Activated T-helper 1 cell treated with anti-CD3 and anti-CD28 coated beads, Interleukin-12 subunit alpha, Interleukin-12 subunit beta, Interleukin-2, Interleukin-4 antibody, amounts not matched to agents 30 ng/mL and 10 ng/mL and 1 ng/mL, durations not matched to agents 14 hours and 24 hours and 36 hours (primary cell): ENCODE measurements at regions of chr13 and their contacts with region 1.

Region 1: DNA sequence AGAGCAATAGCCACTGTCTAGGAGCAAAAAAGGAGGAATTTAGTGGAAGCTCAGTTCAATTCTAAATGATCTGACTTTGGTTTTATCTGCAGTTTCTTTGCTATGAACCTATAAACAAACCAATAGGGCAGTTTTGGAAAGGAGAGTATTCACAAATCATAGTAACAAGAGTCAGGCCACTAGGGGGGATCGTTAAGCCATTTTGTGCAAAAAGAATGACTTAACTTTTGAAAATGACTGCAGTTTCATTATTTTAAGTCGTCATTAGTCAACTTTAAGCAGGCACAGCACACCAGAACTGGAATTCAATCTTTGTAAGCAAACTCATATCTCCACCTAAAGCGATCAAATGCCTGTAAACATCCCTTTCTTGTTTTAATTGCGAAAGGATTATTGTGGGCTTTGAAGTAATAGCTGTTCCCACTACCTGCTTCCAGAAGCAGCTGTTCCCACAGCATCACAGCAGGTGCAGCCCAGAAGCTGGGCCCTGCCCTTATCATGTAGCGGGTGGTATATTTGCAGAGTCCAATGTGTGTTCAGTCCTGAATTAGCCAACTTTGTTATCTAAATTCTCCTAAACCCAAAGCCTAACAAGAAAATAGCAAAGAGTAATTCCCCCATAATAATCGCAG is 51.5 kb downstream of the SOX21 start:
- DNase-seq: no peak
- H3K4me3 Mint-ChIP-seq: no peak overlapping the region
- H3K27ac Mint-ChIP-seq: no peak overlapping the region
- H3K4me1 Mint-ChIP-seq: peaks cover 51% of the 10 kb centered on the region
- H3K27me3 Mint-ChIP-seq: peaks cover 8% of the 10 kb centered on the region

Region 2: GRCh38 chr13:94549232-94550061 is 111.4 kb before region 1 on chr13:
- intact Hi-C with region 1: loop called (anchors 2 kb)
- DNase-seq: peak; percentile 87
- H3K4me3 Mint-ChIP-seq: peak overlapping the region; percentile 84
- H3K27ac Mint-ChIP-seq: peak overlapping the region; percentile 99
- H3K4me1 Mint-ChIP-seq: peaks cover 25% of the 10 kb centered on the region
- H3K27me3 Mint-ChIP-seq: peaks cover 15% of the 10 kb centered on the region

Region 3: DNA sequence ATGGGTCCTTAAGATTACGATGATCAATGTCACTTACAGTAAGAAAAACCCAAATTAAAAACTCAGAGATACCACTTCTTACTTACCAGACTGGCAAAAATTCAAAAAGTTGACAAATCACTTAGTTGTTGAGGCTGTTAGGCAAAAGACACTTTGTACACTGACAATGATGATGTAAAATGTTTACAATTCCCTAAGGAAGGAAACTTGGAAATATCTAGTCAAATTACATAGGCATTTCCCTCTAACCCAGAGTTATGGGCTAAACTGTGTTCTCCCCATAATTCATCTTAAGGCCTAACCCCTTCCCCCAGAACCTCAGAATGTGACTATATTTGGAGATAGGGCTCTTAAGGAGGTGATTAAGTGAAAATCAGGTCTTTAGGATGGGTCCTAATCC is 76.9 kb before region 1 on chr13:
- intact Hi-C with region 1: no loop called
- DNase-seq: no peak
- H3K4me3 Mint-ChIP-seq: no peak overlapping the region
- H3K27ac Mint-ChIP-seq: no peak overlapping the region
- H3K4me1 Mint-ChIP-seq: peaks cover 20% of the 10 kb centered on the region
- H3K27me3 Mint-ChIP-seq: no peaks in the 10 kb centered on the region

Region 4: DNA sequence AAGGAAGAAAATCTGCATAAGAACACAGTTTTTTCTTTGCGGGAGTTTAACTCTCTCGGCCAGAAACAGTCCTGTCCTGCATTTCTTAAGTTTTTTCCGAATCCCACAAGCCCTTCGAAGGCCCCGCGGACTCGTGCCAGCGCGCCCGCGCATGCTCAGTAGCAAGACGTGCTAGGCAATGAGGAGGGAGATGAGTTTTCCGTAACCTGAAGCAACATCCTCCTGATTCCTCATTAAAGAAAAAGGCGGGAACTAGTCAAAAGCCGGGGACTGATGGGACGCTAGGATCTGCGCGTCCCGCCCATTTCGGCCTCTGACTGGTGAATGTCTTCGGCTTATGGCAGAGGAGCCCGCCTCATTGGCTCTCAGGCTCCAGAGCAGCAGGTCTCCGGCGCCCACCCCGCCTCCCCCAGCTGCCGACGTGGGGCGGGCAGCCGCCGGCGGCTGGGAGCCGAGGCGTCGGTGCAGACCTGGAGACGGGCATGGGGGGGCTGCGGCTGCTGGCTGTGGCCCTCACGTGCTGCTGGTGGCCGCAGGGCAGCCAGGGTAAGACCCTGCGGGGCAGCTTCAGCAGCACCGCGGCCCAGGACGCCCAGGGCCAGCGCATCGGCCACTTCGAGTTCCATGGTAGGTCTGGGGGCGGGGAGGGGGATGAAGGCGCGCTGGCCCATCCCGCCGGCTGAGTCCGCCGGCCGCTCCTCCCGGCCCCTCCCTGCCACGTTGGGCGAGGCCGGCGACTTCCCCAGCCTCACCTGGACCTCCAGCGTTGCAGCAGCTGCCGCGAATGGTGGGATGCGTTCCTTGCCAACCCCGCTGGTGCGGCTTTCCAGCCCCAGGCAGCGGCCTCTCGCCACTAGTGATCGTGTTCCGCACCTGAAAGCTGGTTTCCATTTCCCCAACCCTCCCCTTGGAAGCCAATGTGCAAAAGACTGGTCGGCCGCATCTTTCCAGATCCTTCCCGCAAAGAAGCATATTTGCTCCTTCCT is 59.1 kb before region 1 on chr13 and contains the start of gene GPR180:
- intact Hi-C with region 1: loop called (anchors 1 kb)
- DNase-seq: peak; percentile 89
- H3K4me3 Mint-ChIP-seq: peak within 1 kb of the TSS; percentile 88
- H3K27ac Mint-ChIP-seq: peak within 1 kb of the TSS; percentile 75
- H3K4me1 Mint-ChIP-seq: peaks cover 31% of the 10 kb centered on the region
- H3K27me3 Mint-ChIP-seq: no peaks in the 10 kb centered on the region
- total RNA-seq, gene GPR180: 9.6 and 11.1 TPM in 2 replicates

Region 5: GRCh38 chr13:94674609-94675348 is 14.0 kb after region 1 on chr13:
- intact Hi-C with region 1: loop called (anchors 2 kb)
- DNase-seq: no peak
- H3K4me3 Mint-ChIP-seq: no peak overlapping the region
- H3K27ac Mint-ChIP-seq: no peak overlapping the region
- H3K4me1 Mint-ChIP-seq: no peaks in the 10 kb centered on the region
- H3K27me3 Mint-ChIP-seq: peaks cover 19% of the 10 kb centered on the region

Region 6: GRCh38 chr13:94705081-94705751 is 44.4 kb after region 1 on chr13:
- intact Hi-C with region 1: loop called (anchors 2 kb)
- DNase-seq: no peak
- H3K4me3 Mint-ChIP-seq: no peak overlapping the region
- H3K27ac Mint-ChIP-seq: peak overlapping the region; percentile 61
- H3K4me1 Mint-ChIP-seq: peaks cover 6% of the 10 kb centered on the region
- H3K27me3 Mint-ChIP-seq: peaks cover 90% of the 10 kb centered on the region

Region 7: GRCh38 chr13:95301183-95301967 is 640.6 kb after region 1 on chr13 and contains the start of gene ABCC4:
- intact Hi-C with region 1: loop called (anchors 10 kb)
- DNase-seq: peak; percentile 51
- H3K4me3 Mint-ChIP-seq: peak within 1 kb of the TSS; percentile 95
- H3K27ac Mint-ChIP-seq: peak within 1 kb of the TSS; percentile 82
- H3K4me1 Mint-ChIP-seq: peaks cover 33% of the 10 kb centered on the region
- H3K27me3 Mint-ChIP-seq: peaks cover 15% of the 10 kb centered on the region
- total RNA-seq, gene ABCC4: 16.4 and 20.2 TPM in 2 replicates